ENCODE measurements at regions of chr6 and their contacts with region 1.

Region 1: GRCh38 chr6:49531774-49532569 is 18.5 kb upstream of the C6orf141 start:
- DNase-seq: no peak
- ATAC-seq: peak; percentile 99
- H3K4me3 ChIP-seq: no peak overlapping the region
- H3K27ac ChIP-seq: no peak overlapping the region
- H3K4me1 ChIP-seq: no peaks in the 10 kb centered on the region
- H3K27me3 ChIP-seq: no peaks in the 10 kb centered on the region
- CTCF ChIP-seq: peak; percentile 62 to 93 (median 81); a peak in 5 of 6 replicates
- EP300 ChIP-seq: no peak
- POLR2A ChIP-seq: no peak
- RAD21 ChIP-seq: peak; percentile 68

Region 2: DNA sequence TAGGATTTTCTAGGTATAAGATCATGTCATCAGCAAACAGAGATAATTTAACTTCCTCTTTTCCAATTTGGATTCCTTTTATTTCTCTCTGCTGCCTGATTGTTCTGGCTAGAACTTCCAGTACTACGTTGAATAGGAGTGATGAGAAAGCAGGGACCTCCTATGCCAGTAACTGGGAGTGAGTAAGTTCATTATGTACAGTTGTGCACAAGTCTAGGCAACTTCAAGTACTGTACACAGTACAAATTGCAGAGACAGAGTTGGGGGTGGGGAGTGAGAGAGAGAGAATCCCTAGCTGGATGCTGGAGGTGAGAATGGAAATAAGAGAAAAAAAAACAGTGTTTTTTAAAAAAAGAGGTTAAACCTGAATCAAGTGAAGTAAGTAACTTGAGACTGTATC is 279.1 kb before region 1 on chr6:
- CTCF ChIA-PET with region 1: no interaction called
- POLR2A ChIA-PET with region 1: no interaction called
- RAD21 ChIA-PET with region 1: no interaction called
- SMC1A ChIA-PET with region 1: no interaction called
- in situ Hi-C with region 1: no loop called
- intact Hi-C with region 1: no loop called
- DNase-seq: no peak
- ATAC-seq: no peak
- H3K4me3 ChIP-seq: no peak overlapping the region
- H3K27ac ChIP-seq: no peak overlapping the region
- H3K4me1 ChIP-seq: no peaks in the 10 kb centered on the region
- H3K27me3 ChIP-seq: no peaks in the 10 kb centered on the region; a peak in 1 of 4 replicates
- CTCF ChIP-seq: no peak
- EP300 ChIP-seq: no peak
- POLR2A ChIP-seq: no peak
- RAD21 ChIP-seq: no peak

Region 3: GRCh38 chr6:49606696-49607390 is 74.9 kb after region 1 on chr6:
- CTCF ChIA-PET with region 1: interaction called, 98 read pairs
- POLR2A ChIA-PET with region 1: no interaction called
- RAD21 ChIA-PET with region 1: interaction called, 14 read pairs
- SMC1A ChIA-PET with region 1: interaction called, 10 read pairs
- in situ Hi-C with region 1: loop called (anchors 5 kb)
- intact Hi-C with region 1: loop called (anchors 1 kb)
- DNase-seq: peak; percentile 11
- ATAC-seq: peak; percentile 75
- H3K4me3 ChIP-seq: no peak overlapping the region
- H3K27ac ChIP-seq: no peak overlapping the region
- H3K4me1 ChIP-seq: no peaks in the 10 kb centered on the region
- H3K27me3 ChIP-seq: no peaks in the 10 kb centered on the region
- CTCF ChIP-seq: peak; percentile 80 to 89 (median 80)
- EP300 ChIP-seq: no peak
- POLR2A ChIP-seq: no peak
- RAD21 ChIP-seq: peak; percentile 70

Region 4: GRCh38 chr6:49625140-49625539 is 93.2 kb after region 1 on chr6:
- CTCF ChIA-PET with region 1: interaction called, 10 read pairs
- POLR2A ChIA-PET with region 1: no interaction called
- RAD21 ChIA-PET with region 1: no interaction called
- SMC1A ChIA-PET with region 1: no interaction called
- in situ Hi-C with region 1: no loop called
- intact Hi-C with region 1: no loop called
- DNase-seq: no peak
- ATAC-seq: no peak
- H3K4me3 ChIP-seq: no peak overlapping the region
- H3K27ac ChIP-seq: no peak overlapping the region
- H3K4me1 ChIP-seq: no peaks in the 10 kb centered on the region
- H3K27me3 ChIP-seq: no peaks in the 10 kb centered on the region
- CTCF ChIP-seq: no peak
- EP300 ChIP-seq: no peak
- POLR2A ChIP-seq: no peak
- RAD21 ChIP-seq: no peak

Region 5: DNA sequence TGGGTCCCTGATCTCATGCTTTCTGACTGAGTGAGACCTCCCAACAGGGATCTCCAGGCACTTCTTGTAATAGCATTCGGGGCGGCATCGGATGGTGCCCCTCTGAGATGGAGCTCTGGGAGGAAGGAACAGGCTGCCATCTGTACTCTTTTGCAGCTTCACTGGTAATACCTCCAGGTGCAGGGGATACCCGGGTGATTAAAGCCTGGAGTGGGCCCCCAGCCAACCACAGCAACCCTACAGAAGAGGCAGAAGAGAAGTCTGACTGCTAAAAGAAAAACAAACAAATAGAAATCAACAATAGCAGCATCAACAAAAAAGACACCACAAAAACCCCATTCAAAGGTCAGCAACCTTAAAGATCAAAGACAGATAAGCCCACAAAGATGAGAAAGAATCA is 274.2 kb after region 1 on chr6:
- CTCF ChIA-PET with region 1: no interaction called
- POLR2A ChIA-PET with region 1: no interaction called
- RAD21 ChIA-PET with region 1: no interaction called
- SMC1A ChIA-PET with region 1: no interaction called
- in situ Hi-C with region 1: no loop called
- intact Hi-C with region 1: no loop called
- DNase-seq: no peak
- ATAC-seq: no peak
- H3K4me3 ChIP-seq: no peak overlapping the region
- H3K27ac ChIP-seq: no peak overlapping the region
- H3K4me1 ChIP-seq: no peaks in the 10 kb centered on the region
- H3K27me3 ChIP-seq: no peaks in the 10 kb centered on the region
- CTCF ChIP-seq: no peak
- EP300 ChIP-seq: no peak
- POLR2A ChIP-seq: no peak
- RAD21 ChIP-seq: no peak

Region 6: DNA sequence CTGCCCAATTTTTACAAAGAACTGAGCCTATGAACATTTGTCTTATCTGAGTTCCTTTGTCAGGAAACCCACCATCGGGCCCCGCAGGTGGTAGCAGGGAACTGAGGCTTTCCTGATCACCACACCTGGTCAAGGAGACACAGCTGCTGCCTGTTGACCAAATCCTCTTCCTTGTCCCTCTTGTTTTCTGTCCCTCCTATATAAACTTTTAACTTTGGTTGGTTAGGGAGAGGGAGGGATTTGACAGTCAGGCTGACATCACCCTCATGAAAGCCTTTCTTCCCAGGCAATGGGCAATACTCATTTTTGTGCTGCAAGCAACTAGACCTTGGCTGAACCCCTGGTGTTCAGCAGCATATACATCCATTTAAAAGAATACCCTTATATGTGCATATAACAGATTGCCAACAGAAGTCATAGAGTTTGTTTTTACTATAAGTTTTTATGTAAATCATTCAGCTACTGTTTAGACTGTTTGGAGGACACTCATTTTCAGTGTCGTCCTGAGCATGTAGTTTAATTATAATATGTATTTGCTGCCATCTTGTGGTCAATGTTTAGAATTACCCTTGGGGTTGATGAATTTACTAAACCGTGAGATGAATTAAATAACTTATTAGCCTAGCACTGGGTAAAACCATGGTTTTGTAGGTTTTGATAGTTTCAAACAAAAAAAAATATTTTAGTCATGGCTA is 317.4 kb after region 1 on chr6:
- CTCF ChIA-PET with region 1: interaction called, 35 read pairs
- POLR2A ChIA-PET with region 1: interaction called, 4 read pairs
- RAD21 ChIA-PET with region 1: interaction called, 10 read pairs
- SMC1A ChIA-PET with region 1: interaction called, 8 read pairs
- in situ Hi-C with region 1: loop called (anchors 5 kb)
- intact Hi-C with region 1: loop called (anchors 1 kb)
- DNase-seq: no peak
- ATAC-seq: peak; percentile 90
- H3K4me3 ChIP-seq: no peak overlapping the region
- H3K27ac ChIP-seq: no peak overlapping the region
- H3K4me1 ChIP-seq: no peaks in the 10 kb centered on the region
- H3K27me3 ChIP-seq: no peaks in the 10 kb centered on the region
- CTCF ChIP-seq: peak in 2 of 3 experiments; percentile 39 to 55; a peak in 5 of 6 replicates
- EP300 ChIP-seq: no peak
- POLR2A ChIP-seq: no peak
- RAD21 ChIP-seq: peak; percentile 61

Region 7: GRCh38 chr6:50843842-50844241 is 1311.9 kb after region 1 on chr6:
- CTCF ChIA-PET with region 1: no interaction called
- POLR2A ChIA-PET with region 1: no interaction called
- RAD21 ChIA-PET with region 1: no interaction called
- SMC1A ChIA-PET with region 1: no interaction called
- in situ Hi-C with region 1: no loop called
- intact Hi-C with region 1: no loop called
- DNase-seq: no peak
- ATAC-seq: peak; percentile 47; the same call in 2 of the 3 replicates
- H3K4me3 ChIP-seq: no peak overlapping the region
- H3K27ac ChIP-seq: no peak overlapping the region
- H3K4me1 ChIP-seq: no peaks in the 10 kb centered on the region
- H3K27me3 ChIP-seq: peaks cover 10 to 20% of the 10 kb centered on the region in 2 experiments
- CTCF ChIP-seq: no peak
- EP300 ChIP-seq: no peak
- POLR2A ChIP-seq: no peak
- RAD21 ChIP-seq: no peak